Gastrocnemius medialis (tissue), 4 donors: ENCODE measurements at regions of chr12 and their contacts with region 1.

Region 1: GRCh38 chr12:47397664-47398281 is 308.1 kb downstream of the RPAP3 start:
- DNase-seq: peak in 1 of 2 donors; percentile 21
- ATAC-seq: peak in 1 of 2 donors; percentile 84
- H3K4me3 ChIP-seq: no peak overlapping the region
- H3K27ac ChIP-seq: no peak overlapping the region
- H3K4me1 ChIP-seq: peaks cover 0 to 7% of the 10 kb centered on the region in 2 donors
- H3K27me3 ChIP-seq: no peaks in the 10 kb centered on the region
- CTCF ChIP-seq: peak in 3 of 5 experiments; percentile 13 to 44 (median 21)
- POLR2A ChIP-seq: no peak

Region 2: DNA sequence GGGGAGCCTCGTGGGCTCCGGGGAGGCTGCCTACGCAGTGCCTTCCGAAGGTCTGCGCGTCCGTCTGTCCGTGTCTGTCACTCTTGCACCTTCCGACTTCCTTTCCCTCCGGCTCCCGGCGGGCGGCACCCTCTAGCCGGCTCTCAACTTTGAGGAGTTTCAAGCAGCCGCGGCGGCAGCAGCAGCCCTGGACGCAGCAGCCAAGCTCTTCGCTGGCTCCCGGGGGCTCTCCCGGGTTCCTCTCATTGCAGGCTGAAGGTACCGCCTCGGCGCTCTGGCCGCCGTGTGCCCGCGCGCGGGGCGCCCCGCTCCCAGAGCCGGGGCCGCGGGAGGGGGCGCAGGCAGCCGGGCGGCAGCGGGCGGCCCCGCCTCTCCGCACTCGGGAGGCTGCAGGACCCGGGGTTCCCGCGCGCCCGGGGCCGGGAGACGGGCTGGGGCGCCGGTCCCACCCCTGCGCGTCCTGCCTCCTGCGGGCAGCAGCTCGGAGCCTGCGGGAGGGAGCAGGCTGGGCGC is 318.2 kb before region 1 on chr12 and contains the starts of genes AMIGO2 and PCED1B:
- in situ Hi-C with region 1: no loop called
- intact Hi-C with region 1: loop called (anchors 5 kb)
- DNase-seq: peak; percentile 18 to 51
- ATAC-seq: peak; percentile 53 to 62
- H3K4me3 ChIP-seq: peak within 1 kb of the TSS; percentile 56 to 65 (median 64)
- H3K27ac ChIP-seq: peak within 1 kb of the TSS; percentile 57 to 74 (median 68)
- H3K4me1 ChIP-seq: peaks cover 0 to 9% of the 10 kb centered on the region in 2 donors
- H3K27me3 ChIP-seq: peaks cover 0 to 28% (median 3%) of the 10 kb centered on the region in 3 donors
- CTCF ChIP-seq: no peak
- POLR2A ChIP-seq: no peak
- total RNA-seq, gene AMIGO2: 0.41 to 1.5 (median 0.51) TPM
- total RNA-seq, gene PCED1B: 0.36 to 0.55 (median 0.47) TPM in 3 of 4 donors, not detected in the other

Region 3: GRCh38 chr12:47442310-47442709 is 44.5 kb after region 1 on chr12:
- in situ Hi-C with region 1: no loop called
- intact Hi-C with region 1: no loop called
- DNase-seq: no peak
- ATAC-seq: no peak
- H3K4me3 ChIP-seq: no peak overlapping the region
- H3K27ac ChIP-seq: no peak overlapping the region
- H3K4me1 ChIP-seq: no peaks in the 10 kb centered on the region
- H3K27me3 ChIP-seq: no peaks in the 10 kb centered on the region
- CTCF ChIP-seq: no peak
- POLR2A ChIP-seq: no peak